Cardiac septum (tissue), 1 donor: ENCODE measurements at regions of chr17 and their contacts with region 1.

Region 1: GRCh38 chr17:45640141-45640850 is 143.8 kb upstream of the CRHR1 start:
- DNase-seq: peak; percentile 79

Region 2: GRCh38 chr17:45828628-45829027 is 188.3 kb after region 1 on chr17:
- intact Hi-C with region 1: loop called (anchors 1 kb)
- DNase-seq: no peak